Heart left ventricle (tissue), 16 donors: ENCODE measurements at regions of chr20 and their contacts with region 1.

Region 1: GRCh38 chr20:407133-407952 is 756 bp upstream of the RBCK1 start:
- DNase-seq: peak; percentile 78 to 88 (median 83)
- ATAC-seq: peak; percentile 75 to 86 (median 81)
- H3K4me3 ChIP-seq: peak overlapping the region; percentile 6 to 100 (median 96)
- H3K27ac ChIP-seq: peak overlapping the region; percentile 49 to 98 (median 95)
- H3K4me1 ChIP-seq: peaks cover 4 to 29% (median 19%) of the 10 kb centered on the region in 12 donors
- H3K27me3 ChIP-seq: no peaks in the 10 kb centered on the region
- CTCF ChIP-seq: peak in 8 of 12 donors; percentile 13 to 39 (median 23)
- POLR2A ChIP-seq: no peak

Region 2: DNA sequence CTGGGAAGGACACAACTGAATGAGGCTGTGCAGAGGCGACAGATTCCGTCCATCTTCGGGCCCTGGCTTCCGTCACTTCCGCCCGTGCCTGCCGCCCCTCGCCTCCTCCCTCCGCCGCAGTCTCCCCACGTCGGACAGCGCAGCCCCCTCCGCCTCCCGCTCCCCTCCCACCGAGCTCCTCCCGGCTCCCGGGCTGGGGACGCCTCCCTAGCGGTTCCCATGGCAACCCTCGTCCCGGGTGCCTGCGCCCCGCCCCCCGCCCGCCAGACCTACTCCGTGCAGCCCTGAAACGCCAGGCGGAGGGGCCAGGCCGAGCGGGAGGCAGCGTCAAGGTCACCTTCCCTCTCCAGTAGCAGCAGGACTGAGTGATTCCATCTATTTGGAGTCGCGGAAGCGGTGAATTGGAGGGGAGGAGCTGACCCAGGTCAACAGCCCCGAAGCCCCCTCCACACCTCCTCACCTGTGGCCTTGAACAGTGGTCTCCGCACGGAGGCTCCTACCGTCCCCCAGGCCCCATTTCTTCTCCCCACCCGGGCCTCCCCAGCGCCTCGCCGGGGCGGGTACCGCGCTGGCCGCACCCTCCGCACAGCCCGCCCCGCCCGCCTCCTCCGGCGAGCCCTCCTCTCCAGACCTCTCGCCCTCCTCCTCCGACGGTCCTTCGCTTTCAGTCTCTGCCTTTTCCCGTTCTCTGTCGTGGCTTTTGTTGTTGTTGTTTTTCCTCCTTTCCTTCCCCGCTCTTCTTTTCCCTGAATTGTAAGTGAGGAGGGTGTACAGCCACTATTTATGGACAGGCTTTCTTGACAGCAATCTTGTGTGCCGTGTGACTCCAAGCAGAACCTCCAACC is 59.5 kb before region 1 on chr20:
- intact Hi-C with region 1: loop called in 2 of 10 experiments (anchors 5 kb)
- DNase-seq: peak; percentile 93 to 96 (median 95)
- ATAC-seq: peak; percentile 81 to 90 (median 90)
- H3K4me3 ChIP-seq: peak overlapping the region; percentile 69 to 97 (median 82)
- H3K27ac ChIP-seq: peak overlapping the region; percentile 88 to 99 (median 95)
- H3K4me1 ChIP-seq: peaks cover 0 to 35% (median 11%) of the 10 kb centered on the region in 12 donors
- H3K27me3 ChIP-seq: no peaks in the 10 kb centered on the region
- CTCF ChIP-seq: no peak
- POLR2A ChIP-seq: peak in 1 of 2 donors; percentile 61

Region 3: GRCh38 chr20:362271-363254 is 44.8 kb before region 1 on chr20:
- intact Hi-C with region 1: loop called in 1 of 10 experiments (anchors 5 kb)
- DNase-seq: peak; percentile 87 to 94 (median 90)
- ATAC-seq: peak; percentile 84 to 97 (median 92)
- H3K4me3 ChIP-seq: no peak overlapping the region
- H3K27ac ChIP-seq: no peak overlapping the region
- H3K4me1 ChIP-seq: peaks cover 0 to 12% (median 0%) of the 10 kb centered on the region in 12 donors
- H3K27me3 ChIP-seq: no peaks in the 10 kb centered on the region
- CTCF ChIP-seq: peak in 11 of 12 donors; percentile 13 to 59 (median 44)
- POLR2A ChIP-seq: no peak

Region 4: DNA sequence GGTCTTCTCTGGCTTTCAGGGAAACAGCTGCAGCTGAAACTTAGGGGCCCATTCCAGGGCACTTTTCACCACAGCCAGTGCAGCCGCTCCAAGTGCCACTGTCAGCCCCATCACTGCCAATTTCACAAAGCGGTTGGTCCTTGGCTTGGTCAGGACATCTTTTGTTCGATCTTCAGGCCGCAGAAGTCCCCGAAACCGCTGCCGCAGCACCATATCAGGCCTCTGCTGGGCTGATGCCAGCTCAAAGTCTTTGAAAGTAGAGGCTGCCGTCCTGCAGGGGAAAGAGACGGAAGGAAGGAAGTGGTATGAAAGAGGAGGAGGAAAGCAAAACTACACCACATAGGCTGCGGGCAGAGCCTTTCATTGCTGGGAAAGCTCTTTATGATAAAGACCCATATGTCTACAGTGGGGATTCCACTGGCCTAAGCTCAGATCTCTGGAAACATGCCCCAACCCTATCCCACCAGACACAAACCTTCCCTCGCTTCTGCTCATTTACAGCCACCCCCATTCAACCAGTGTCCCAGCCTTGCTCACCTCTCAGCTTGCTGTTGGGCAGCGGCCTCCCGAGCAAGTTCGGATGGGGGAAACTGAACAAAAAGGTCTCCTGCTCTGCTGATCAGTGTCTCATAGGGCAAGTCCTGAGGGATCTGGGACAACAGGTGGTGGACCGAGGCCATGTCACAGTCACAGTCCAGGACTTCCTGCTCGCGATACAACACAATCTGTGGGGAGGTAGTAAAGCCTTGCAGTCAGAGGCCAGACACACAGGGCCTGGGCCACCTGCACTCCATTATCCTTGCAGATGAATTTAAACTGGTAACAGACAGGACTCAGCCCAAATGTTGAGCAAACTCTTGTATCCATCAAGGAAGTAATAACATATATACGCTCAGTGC is 31.5 kb after region 1 on chr20:
- intact Hi-C with region 1: no loop called
- DNase-seq: peak in 2 of 5 donors; percentile 39 to 50
- ATAC-seq: peak in 2 of 4 donors; percentile 33 to 63
- H3K4me3 ChIP-seq: peak overlapping the region in 1 of 12 donors; percentile 21
- H3K27ac ChIP-seq: peak overlapping the region in 5 of 12 donors; percentile 9 to 64 (median 13)
- H3K4me1 ChIP-seq: peaks cover 0 to 34% (median 11%) of the 10 kb centered on the region in 12 donors
- H3K27me3 ChIP-seq: no peaks in the 10 kb centered on the region
- CTCF ChIP-seq: no peak
- POLR2A ChIP-seq: no peak

Region 5: DNA sequence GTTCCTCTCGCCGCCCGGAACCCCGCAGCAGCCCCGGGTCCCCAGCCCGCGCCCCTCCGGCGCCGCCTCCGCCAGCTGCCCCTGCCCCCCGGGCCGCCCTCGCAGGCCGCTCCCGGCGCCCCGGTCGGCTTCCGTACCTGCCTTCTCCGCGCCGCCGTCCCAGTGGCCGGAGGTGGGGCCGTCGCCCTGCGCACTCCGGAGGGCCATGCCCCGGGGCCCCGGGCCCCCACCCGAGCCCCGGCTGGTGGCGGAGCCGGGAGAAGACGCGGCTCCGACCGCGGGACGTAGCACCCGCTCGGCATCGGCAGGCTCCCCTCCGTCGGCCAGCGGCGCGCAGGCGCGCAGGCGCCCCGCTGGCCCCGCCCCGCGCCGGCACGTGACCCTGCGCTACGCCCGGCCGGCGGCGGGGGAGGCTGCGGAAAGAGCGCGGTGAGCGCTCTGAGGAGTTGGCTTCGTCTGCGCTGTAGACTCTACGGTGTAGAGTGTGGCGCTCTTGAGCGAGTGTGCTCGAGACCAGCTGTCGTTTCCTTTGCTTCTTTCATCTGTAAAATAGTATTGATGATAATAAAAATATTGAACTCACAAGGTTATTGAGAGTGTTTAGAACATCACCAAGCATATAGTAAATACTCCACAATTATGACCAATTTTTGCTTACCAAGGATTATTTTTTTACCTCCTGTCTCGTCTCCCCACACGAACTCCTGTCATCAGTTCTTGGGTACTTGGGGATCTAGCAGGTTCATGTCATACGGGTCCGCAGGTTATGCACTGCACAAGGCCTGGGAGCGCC is 55.1 kb after region 1 on chr20 and contains the start of gene TBC1D20:
- intact Hi-C with region 1: loop called in 4 of 10 experiments (anchors 5 kb)
- DNase-seq: peak; percentile 86 to 91 (median 90)
- ATAC-seq: peak; percentile 96 to 98 (median 98)
- H3K4me3 ChIP-seq: peak within 1 kb of the TSS; percentile 43 to 95 (median 86)
- H3K27ac ChIP-seq: peak within 1 kb of the TSS; percentile 81 to 98 (median 92)
- H3K4me1 ChIP-seq: peaks cover 10 to 48% (median 37%) of the 10 kb centered on the region in 12 donors
- H3K27me3 ChIP-seq: no peaks in the 10 kb centered on the region
- CTCF ChIP-seq: peak in 4 of 12 donors; percentile 24 to 41 (median 32)
- POLR2A ChIP-seq: peak; percentile 12 to 84
- total RNA-seq, gene TBC1D20: 19.0 to 38.9 (median 26.3) TPM

Region 6: GRCh38 chr20:478949-479429 is 71.6 kb after region 1 on chr20:
- intact Hi-C with region 1: loop called in 3 of 10 experiments (anchors 2 to 10 kb)
- DNase-seq: peak in 1 of 5 donors; percentile 16
- ATAC-seq: peak in 2 of 4 donors; percentile 28 to 31
- H3K4me3 ChIP-seq: no peak overlapping the region
- H3K27ac ChIP-seq: no peak overlapping the region
- H3K4me1 ChIP-seq: peaks cover 0 to 21% (median 7%) of the 10 kb centered on the region in 12 donors
- H3K27me3 ChIP-seq: no peaks in the 10 kb centered on the region
- CTCF ChIP-seq: peak; percentile 41 to 75 (median 63)
- POLR2A ChIP-seq: no peak

Region 7: DNA sequence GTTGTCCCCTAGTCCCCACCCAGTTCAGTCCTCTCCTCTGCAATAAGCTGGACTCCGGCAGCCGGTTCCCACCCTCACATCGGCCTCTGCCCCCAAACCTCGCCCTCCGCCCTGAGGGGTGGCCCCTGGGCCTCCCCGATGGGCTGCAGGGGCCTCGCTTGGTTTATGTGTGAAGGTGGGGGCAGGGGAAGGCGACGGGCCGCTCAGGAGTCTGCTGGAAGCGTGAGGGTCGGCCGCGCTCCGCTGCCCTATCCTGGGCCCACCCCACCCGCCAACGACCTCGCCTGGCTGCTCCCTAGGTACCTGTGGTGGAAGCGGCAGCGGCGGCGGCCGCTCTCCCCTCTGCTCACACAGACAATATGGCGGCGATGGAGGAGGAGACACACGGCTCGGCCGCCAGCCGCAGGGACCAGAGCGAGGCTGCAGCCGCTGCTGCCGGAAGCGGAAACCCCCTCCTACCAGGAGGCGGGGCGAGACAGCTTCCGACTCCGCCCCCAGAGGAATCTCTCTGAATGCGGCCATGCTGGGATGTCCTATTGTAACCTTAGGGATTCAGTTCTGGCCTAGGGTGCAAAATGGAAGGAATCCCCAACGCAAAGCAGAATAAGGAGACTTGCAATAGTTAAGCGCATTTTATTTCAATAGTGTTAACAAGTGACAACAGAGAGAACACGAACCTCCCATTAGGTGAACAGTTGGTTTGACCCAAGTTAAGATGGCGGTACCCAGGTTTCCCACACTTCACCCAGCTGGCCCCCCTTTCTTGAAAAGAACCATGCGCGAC is 136.2 kb after region 1 on chr20 and contains the start of gene CSNK2A1:
- intact Hi-C with region 1: loop called in 1 of 10 experiments (anchors 5 kb)
- DNase-seq: peak; percentile 95 to 97 (median 96)
- ATAC-seq: peak; percentile 98 to 99 (median 98)
- H3K4me3 ChIP-seq: peak within 1 kb of the TSS; percentile 71 to 99 (median 90)
- H3K27ac ChIP-seq: peak within 1 kb of the TSS; percentile 88 to 96 (median 92)
- H3K4me1 ChIP-seq: peaks cover 8 to 55% (median 36%) of the 10 kb centered on the region in 12 donors
- H3K27me3 ChIP-seq: no peaks in the 10 kb centered on the region
- CTCF ChIP-seq: no peak
- POLR2A ChIP-seq: peak; percentile 33 to 82
- total RNA-seq, gene CSNK2A1: 107 to 136 (median 126) TPM